Naive thymus-derived CD4-positive, alpha-beta T cell (primary cell): ENCODE measurements at regions of chr10 and their contacts with region 1.

Region 1: GRCh38 chr10:31318854-31319601 is at the start of gene ZEB1:
- DNase-seq: peak; percentile 64 to 96 (median 91)
- ATAC-seq: peak; percentile 79
- H3K4me3 ChIP-seq: peak within 1 kb of the TSS; percentile 89
- H3K4me3 Mint-ChIP-seq: peak within 1 kb of the TSS; percentile 91 to 100 (median 99)
- H3K27ac ChIP-seq: peak within 1 kb of the TSS; percentile 99
- H3K27ac Mint-ChIP-seq: peak within 1 kb of the TSS; percentile 96 to 100 (median 99)
- H3K4me1 ChIP-seq: peaks cover 11 to 27% of the 10 kb centered on the region in 2 donors
- H3K4me1 Mint-ChIP-seq: peaks cover 14 to 48% (median 41%) of the 10 kb centered on the region in 7 donors
- H3K27me3 ChIP-seq: no peaks in the 10 kb centered on the region
- H3K27me3 Mint-ChIP-seq: peaks cover 0 to 2% (median 0%) of the 10 kb centered on the region in 5 donors
- total RNA-seq, gene ZEB1: 65.5 to 126 (median 80.9) TPM

Region 2: DNA sequence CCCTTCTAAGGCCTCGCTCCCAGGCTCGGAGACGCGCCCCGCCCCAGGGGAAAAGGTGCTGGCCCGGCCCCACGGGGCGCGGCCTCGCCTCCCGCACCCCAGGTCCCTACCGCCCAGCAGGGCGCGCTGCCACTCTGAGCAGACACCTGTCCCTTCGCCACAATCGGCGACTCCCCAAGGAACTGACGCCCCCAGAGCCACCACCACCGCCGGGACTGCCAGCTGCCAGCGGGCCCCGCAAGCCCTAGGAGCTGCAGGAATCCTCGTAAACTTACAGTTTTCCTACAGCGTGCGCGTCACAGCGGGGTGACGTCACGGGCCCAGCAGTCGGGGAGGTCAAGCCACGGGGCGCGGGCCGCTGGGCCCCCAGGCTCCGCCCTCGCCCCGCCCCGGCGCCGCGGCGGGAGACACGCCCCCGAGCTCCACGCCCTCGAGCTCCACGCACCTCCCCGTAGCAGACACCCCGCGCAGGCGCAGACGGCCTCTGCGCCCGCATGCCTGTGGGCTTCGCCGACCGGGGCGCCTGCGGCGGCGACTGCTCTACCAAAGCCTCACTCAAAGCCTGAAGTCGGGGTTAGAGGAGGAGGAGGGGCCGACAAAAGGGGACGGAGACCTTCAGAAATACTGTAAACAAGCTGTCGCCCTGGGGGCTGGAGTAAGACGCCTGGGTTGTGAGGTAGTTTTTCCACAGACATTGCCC is 287.3 kb before region 1 on chr10 and contains the start of gene ZNF438:
- CTCF ChIA-PET with region 1: no interaction called
- POLR2A ChIA-PET with region 1: interaction called, 7 read pairs
- intact Hi-C with region 1: loop called (anchors 1 kb)
- DNase-seq: peak; percentile 93 to 99 (median 96)
- ATAC-seq: peak; percentile 92
- H3K4me3 ChIP-seq: peak within 1 kb of the TSS; percentile 84
- H3K4me3 Mint-ChIP-seq: peak within 1 kb of the TSS; percentile 89 to 94 (median 92)
- H3K27ac ChIP-seq: peak within 1 kb of the TSS; percentile 96
- H3K27ac Mint-ChIP-seq: peak within 1 kb of the TSS; percentile 93 to 99 (median 99)
- H3K4me1 ChIP-seq: peaks cover 5% of the 10 kb centered on the region in 2 donors
- H3K4me1 Mint-ChIP-seq: peaks cover 7 to 34% (median 14%) of the 10 kb centered on the region in 7 donors
- H3K27me3 ChIP-seq: no peaks in the 10 kb centered on the region
- H3K27me3 Mint-ChIP-seq: no peaks in the 10 kb centered on the region
- total RNA-seq, gene ZNF438: 3.9 to 5.8 (median 4.0) TPM

Region 3: GRCh38 chr10:31343551-31343950 is 24.5 kb after region 1 on chr10:
- CTCF ChIA-PET with region 1: no interaction called
- POLR2A ChIA-PET with region 1: interaction called, 3 read pairs
- intact Hi-C with region 1: loop called (anchors 2 kb)
- DNase-seq: no peak
- ATAC-seq: no peak
- H3K4me3 ChIP-seq: no peak overlapping the region
- H3K4me3 Mint-ChIP-seq: peak overlapping the region in 4 of 10 donors; percentile 16 to 41 (median 30)
- H3K27ac ChIP-seq: no peak overlapping the region
- H3K27ac Mint-ChIP-seq: peak overlapping the region in 2 of 9 donors; percentile 16 to 22
- H3K4me1 ChIP-seq: peaks cover 37 to 48% of the 10 kb centered on the region in 2 donors
- H3K4me1 Mint-ChIP-seq: peaks cover 33 to 51% (median 46%) of the 10 kb centered on the region in 7 donors
- H3K27me3 ChIP-seq: no peaks in the 10 kb centered on the region
- H3K27me3 Mint-ChIP-seq: no peaks in the 10 kb centered on the region

Region 4: GRCh38 chr10:31490858-31491504 is 172.0 kb after region 1 on chr10:
- CTCF ChIA-PET with region 1: no interaction called
- POLR2A ChIA-PET with region 1: no interaction called
- intact Hi-C with region 1: loop called (anchors 2 to 5 kb)
- DNase-seq: peak in 6 of 9 donors; percentile 30 to 50 (median 36)
- ATAC-seq: peak; percentile 72
- H3K4me3 ChIP-seq: no peak overlapping the region
- H3K4me3 Mint-ChIP-seq: no peak overlapping the region
- H3K27ac ChIP-seq: no peak overlapping the region
- H3K27ac Mint-ChIP-seq: peak overlapping the region in 1 of 9 donors; percentile 1
- H3K4me1 ChIP-seq: no peaks in the 10 kb centered on the region
- H3K4me1 Mint-ChIP-seq: peaks cover 0 to 12% (median 0%) of the 10 kb centered on the region in 7 donors
- H3K27me3 ChIP-seq: no peaks in the 10 kb centered on the region
- H3K27me3 Mint-ChIP-seq: no peaks in the 10 kb centered on the region

Region 5: GRCh38 chr10:31928549-31929260 is 609.7 kb after region 1 on chr10 and contains the start of gene ARHGAP12:
- CTCF ChIA-PET with region 1: no interaction called
- POLR2A ChIA-PET with region 1: no interaction called
- intact Hi-C with region 1: loop called (anchors 1 to 2 kb)
- DNase-seq: peak; percentile 76 to 90 (median 85)
- ATAC-seq: peak; percentile 87
- H3K4me3 ChIP-seq: peak within 1 kb of the TSS; percentile 90
- H3K4me3 Mint-ChIP-seq: peak within 1 kb of the TSS; percentile 73 to 95 (median 92)
- H3K27ac ChIP-seq: peak within 1 kb of the TSS; percentile 84
- H3K27ac Mint-ChIP-seq: peak within 1 kb of the TSS; percentile 66 to 93 (median 86)
- H3K4me1 ChIP-seq: peaks cover 10% of the 10 kb centered on the region in 2 donors
- H3K4me1 Mint-ChIP-seq: peaks cover 30 to 51% (median 47%) of the 10 kb centered on the region in 7 donors
- H3K27me3 ChIP-seq: no peaks in the 10 kb centered on the region
- H3K27me3 Mint-ChIP-seq: peaks cover 0 to 9% (median 0%) of the 10 kb centered on the region in 5 donors
- total RNA-seq, gene ARHGAP12: 10.6 to 34.6 (median 31.4) TPM